Activated CD8-positive, alpha-beta T cell treated with anti-CD3 and anti-CD28 coated beads for 36 hours (primary cell): ENCODE measurements at regions of chr9 and their contacts with region 1.

Region 1: GRCh38 chr9:89999534-90000370 is 394.9 kb downstream of the GADD45G start:
- DNase-seq: peak; percentile 90
- ATAC-seq: peak; percentile 95
- H3K4me3 Mint-ChIP-seq: peak overlapping the region; percentile 61
- H3K27ac Mint-ChIP-seq: peak overlapping the region; percentile 87
- H3K4me1 Mint-ChIP-seq: peaks cover 28% of the 10 kb centered on the region
- H3K27me3 Mint-ChIP-seq: no peaks in the 10 kb centered on the region
- CTCF ChIP-seq: no peak

Region 2: GRCh38 chr9:89984214-89984613 is 15.5 kb before region 1 on chr9:
- CTCF ChIA-PET with region 1: interaction called, 9 read pairs
- POLR2A ChIA-PET with region 1: interaction called, 16 read pairs
- intact Hi-C with region 1: no loop called
- DNase-seq: no peak
- ATAC-seq: peak; percentile 45
- H3K4me3 Mint-ChIP-seq: no peak overlapping the region
- H3K27ac Mint-ChIP-seq: peak overlapping the region; percentile 81
- H3K4me1 Mint-ChIP-seq: peaks cover 31% of the 10 kb centered on the region
- H3K27me3 Mint-ChIP-seq: peaks cover 21% of the 10 kb centered on the region
- CTCF ChIP-seq: no peak

Region 3: GRCh38 chr9:90025816-90026215 is 26.1 kb after region 1 on chr9:
- CTCF ChIA-PET with region 1: no interaction called
- POLR2A ChIA-PET with region 1: no interaction called
- intact Hi-C with region 1: no loop called
- DNase-seq: no peak
- ATAC-seq: no peak
- H3K4me3 Mint-ChIP-seq: no peak overlapping the region
- H3K27ac Mint-ChIP-seq: no peak overlapping the region
- H3K4me1 Mint-ChIP-seq: no peaks in the 10 kb centered on the region
- H3K27me3 Mint-ChIP-seq: peaks cover 7% of the 10 kb centered on the region
- CTCF ChIP-seq: no peak

Region 4: GRCh38 chr9:90198956-90199355 is 199.2 kb after region 1 on chr9:
- CTCF ChIA-PET with region 1: no interaction called
- POLR2A ChIA-PET with region 1: no interaction called
- intact Hi-C with region 1: no loop called
- DNase-seq: no peak
- ATAC-seq: no peak
- H3K4me3 Mint-ChIP-seq: no peak overlapping the region
- H3K27ac Mint-ChIP-seq: no peak overlapping the region
- H3K4me1 Mint-ChIP-seq: no peaks in the 10 kb centered on the region
- H3K27me3 Mint-ChIP-seq: no peaks in the 10 kb centered on the region
- CTCF ChIP-seq: no peak

Region 5: DNA sequence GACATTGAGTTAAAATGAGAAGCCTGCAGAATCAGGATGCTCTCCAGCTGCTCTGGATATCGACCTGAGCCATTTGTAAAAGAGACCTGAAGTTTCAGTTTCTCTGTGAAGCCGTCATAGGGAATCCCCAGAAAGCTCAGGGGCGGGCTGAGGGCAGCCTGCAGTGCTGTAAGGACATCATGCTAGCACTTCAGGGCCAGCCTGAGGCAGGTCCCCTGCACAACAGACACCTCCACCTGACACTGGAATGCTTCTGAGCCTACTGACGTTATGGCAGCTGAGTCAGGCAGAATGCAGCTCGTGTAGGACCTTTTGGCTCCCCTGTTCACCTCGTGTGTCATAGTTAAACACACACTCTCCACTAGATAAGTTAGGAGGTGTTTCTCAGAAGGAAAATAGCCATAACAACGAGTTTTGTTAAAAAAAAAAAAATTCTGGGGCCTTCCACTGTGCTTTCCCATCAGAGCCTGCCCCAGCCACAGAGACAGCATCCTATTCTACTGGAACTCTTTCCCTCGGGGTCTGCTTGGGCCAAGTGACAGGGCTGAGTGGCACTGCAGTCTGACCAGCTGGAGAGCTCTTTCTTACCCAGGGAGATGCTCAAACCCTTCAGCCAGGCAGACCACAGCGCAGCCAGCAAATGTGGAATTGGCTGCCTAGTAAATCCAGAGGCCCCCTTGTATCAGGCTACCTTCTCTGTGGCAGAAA is 288.0 kb after region 1 on chr9:
- CTCF ChIA-PET with region 1: no interaction called
- POLR2A ChIA-PET with region 1: no interaction called
- intact Hi-C with region 1: no loop called
- DNase-seq: peak; percentile 28
- ATAC-seq: peak; percentile 73
- H3K4me3 Mint-ChIP-seq: no peak overlapping the region
- H3K27ac Mint-ChIP-seq: no peak overlapping the region
- H3K4me1 Mint-ChIP-seq: peaks cover 2% of the 10 kb centered on the region
- H3K27me3 Mint-ChIP-seq: peaks cover 3% of the 10 kb centered on the region
- CTCF ChIP-seq: no peak